ENCODE measurements at regions of chr1 and their contacts with region 1.

Region 1: GRCh38 chr1:110312188-110313121 is 26.7 kb upstream of the RBM15 start:
- DNase-seq: peak; percentile 78
- ATAC-seq: peak; percentile 99
- H3K4me3 Mint-ChIP-seq: no peak overlapping the region
- H3K27ac Mint-ChIP-seq: no peak overlapping the region
- H3K4me1 Mint-ChIP-seq: no peaks in the 10 kb centered on the region
- H3K27me3 Mint-ChIP-seq: no peaks in the 10 kb centered on the region
- CTCF ChIP-seq: peak; percentile 88

Region 2: DNA sequence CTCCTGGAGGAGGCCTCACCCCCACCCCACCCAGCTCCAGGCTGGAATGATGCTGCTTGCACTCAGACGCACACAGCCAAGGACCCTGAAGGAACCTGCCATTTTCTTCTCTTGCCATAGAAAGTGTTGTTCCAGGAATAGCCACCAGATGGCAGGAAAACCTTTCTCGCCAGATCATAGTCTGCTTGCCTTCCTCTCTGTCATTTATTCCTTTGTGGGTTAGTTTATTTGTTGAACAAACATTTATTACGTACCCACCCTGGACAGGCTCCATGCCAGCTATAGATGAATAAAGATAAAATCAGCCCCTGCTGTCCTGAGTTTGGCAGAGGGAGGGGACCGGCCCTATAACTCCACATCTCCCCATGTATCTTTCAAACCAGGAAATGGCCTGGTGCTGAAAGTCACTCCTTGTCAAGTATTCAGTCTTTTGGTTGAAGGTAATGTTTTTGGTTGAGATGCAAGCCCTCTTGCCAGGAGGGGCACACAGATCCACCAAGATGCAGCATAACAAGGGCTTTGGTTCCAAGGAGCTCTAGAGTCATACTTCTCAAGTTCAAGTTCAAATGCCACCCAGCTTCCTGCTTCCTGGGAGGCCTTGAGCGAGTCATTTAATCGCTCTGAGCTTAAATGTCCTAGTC is 109.3 kb before region 1 on chr1:
- CTCF ChIA-PET with region 1: interaction called, 761 read pairs
- POLR2A ChIA-PET with region 1: interaction called, 8 read pairs
- intact Hi-C with region 1: loop called (anchors 1 kb)
- DNase-seq: peak; percentile 84
- ATAC-seq: peak; percentile 75
- H3K4me3 Mint-ChIP-seq: no peak overlapping the region
- H3K27ac Mint-ChIP-seq: peak overlapping the region; percentile 91
- H3K4me1 Mint-ChIP-seq: peaks cover 21% of the 10 kb centered on the region
- H3K27me3 Mint-ChIP-seq: no peaks in the 10 kb centered on the region
- CTCF ChIP-seq: peak; percentile 78

Region 3: DNA sequence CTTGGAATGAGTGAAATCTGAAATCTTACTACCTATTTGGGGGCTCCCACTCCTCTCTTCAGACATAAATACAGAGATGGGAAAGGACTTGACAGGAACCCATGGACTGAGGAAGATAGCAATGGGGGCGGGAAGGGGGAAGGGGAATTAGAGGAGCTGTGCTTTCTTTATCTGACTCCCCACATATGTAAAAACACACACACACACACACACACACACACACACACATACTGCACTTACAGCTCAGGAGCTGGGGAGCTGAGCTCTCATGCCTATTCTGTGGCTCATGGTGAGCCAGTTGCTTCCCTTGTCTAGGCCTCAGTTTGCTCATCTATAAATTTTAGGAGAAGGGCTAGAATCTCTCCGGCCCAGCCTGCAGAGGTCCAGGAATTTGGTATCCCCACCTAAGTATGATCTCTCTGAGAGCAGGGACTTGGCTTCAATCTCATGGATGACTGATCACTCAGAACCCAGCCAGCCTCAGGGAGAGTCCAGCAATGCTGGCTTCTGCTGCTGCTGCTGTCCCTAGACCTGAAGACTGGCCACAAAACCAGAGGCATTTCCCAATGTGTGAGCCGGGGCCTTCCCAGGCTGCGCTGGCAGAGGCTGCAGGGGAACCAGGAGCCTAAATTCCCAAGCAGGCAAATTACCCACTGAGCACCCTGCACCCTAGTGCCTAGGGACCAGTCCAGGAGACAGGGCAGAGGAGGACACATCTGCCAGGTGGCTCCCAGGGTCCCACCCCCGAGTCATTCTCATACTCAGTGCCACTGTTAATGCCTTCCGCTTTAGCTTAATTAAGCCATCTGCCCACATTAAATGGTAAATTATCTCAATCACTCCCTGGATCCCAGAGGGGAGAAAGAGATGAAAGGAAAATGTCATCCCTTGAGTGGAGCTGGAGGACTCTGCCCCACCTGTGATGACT is 30.8 kb before region 1 on chr1:
- CTCF ChIA-PET with region 1: interaction called, 12 read pairs
- POLR2A ChIA-PET with region 1: no interaction called
- intact Hi-C with region 1: no loop called
- DNase-seq: no peak
- ATAC-seq: no peak
- H3K4me3 Mint-ChIP-seq: no peak overlapping the region
- H3K27ac Mint-ChIP-seq: no peak overlapping the region
- H3K4me1 Mint-ChIP-seq: no peaks in the 10 kb centered on the region
- H3K27me3 Mint-ChIP-seq: no peaks in the 10 kb centered on the region
- CTCF ChIP-seq: no peak

Region 4: GRCh38 chr1:110298991-110299390 is 13.5 kb before region 1 on chr1:
- CTCF ChIA-PET with region 1: interaction called, 21 read pairs
- POLR2A ChIA-PET with region 1: no interaction called
- intact Hi-C with region 1: no loop called
- DNase-seq: no peak
- ATAC-seq: no peak
- H3K4me3 Mint-ChIP-seq: no peak overlapping the region
- H3K27ac Mint-ChIP-seq: no peak overlapping the region
- H3K4me1 Mint-ChIP-seq: no peaks in the 10 kb centered on the region
- H3K27me3 Mint-ChIP-seq: no peaks in the 10 kb centered on the region
- CTCF ChIP-seq: no peak

Region 5: DNA sequence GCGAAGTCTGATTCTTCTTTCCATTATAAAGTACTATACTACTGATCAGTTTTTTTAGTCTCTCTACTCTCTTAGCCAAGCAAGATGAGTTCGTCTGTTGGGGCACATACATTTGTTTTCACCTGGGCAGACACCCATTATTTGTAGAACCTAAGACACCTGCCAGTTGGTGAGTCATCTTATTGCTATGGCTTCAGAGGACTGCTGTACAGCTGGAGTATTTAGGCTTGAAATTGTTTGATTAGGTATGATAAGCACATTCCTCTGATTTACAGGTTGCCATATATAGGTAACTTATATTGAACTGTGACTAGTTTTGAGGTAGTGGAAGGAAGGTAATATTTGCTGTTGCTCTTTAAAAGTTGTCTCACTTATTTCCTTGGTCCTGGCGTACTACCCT is 44.0 kb after region 1 on chr1:
- CTCF ChIA-PET with region 1: no interaction called
- POLR2A ChIA-PET with region 1: no interaction called
- intact Hi-C with region 1: no loop called
- DNase-seq: no peak
- ATAC-seq: no peak
- H3K4me3 Mint-ChIP-seq: no peak overlapping the region
- H3K27ac Mint-ChIP-seq: no peak overlapping the region
- H3K4me1 Mint-ChIP-seq: peaks cover 37% of the 10 kb centered on the region
- H3K27me3 Mint-ChIP-seq: no peaks in the 10 kb centered on the region
- CTCF ChIP-seq: no peak

Region 6: DNA sequence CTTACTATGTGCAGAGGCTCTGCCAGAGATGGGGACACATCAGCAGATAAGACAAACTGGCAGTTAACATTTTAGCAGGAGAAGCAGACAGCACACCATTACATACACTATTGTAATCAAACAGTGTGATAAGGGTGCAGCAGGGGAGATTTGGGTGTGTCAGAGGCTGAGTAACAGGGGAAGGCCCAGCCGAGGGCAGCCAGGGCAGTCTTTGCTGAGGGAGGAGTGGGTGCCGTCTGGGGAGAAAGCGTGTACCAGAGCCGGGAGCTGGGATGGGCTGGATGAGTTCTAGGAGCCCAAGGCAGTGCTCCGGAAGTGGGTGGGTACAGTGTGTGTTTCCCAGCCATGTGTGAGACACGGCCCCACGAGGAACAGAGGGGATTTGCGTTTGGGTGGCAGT is 175.3 kb after region 1 on chr1:
- CTCF ChIA-PET with region 1: no interaction called
- POLR2A ChIA-PET with region 1: no interaction called
- intact Hi-C with region 1: no loop called
- DNase-seq: no peak
- ATAC-seq: no peak
- H3K4me3 Mint-ChIP-seq: no peak overlapping the region
- H3K27ac Mint-ChIP-seq: no peak overlapping the region
- H3K4me1 Mint-ChIP-seq: no peaks in the 10 kb centered on the region
- H3K27me3 Mint-ChIP-seq: peaks cover 6% of the 10 kb centered on the region
- CTCF ChIP-seq: no peak